Esophagus muscularis mucosa (tissue), 4 donors: ENCODE measurements at regions of chr19 and their contacts with region 1.

Region 1: DNA sequence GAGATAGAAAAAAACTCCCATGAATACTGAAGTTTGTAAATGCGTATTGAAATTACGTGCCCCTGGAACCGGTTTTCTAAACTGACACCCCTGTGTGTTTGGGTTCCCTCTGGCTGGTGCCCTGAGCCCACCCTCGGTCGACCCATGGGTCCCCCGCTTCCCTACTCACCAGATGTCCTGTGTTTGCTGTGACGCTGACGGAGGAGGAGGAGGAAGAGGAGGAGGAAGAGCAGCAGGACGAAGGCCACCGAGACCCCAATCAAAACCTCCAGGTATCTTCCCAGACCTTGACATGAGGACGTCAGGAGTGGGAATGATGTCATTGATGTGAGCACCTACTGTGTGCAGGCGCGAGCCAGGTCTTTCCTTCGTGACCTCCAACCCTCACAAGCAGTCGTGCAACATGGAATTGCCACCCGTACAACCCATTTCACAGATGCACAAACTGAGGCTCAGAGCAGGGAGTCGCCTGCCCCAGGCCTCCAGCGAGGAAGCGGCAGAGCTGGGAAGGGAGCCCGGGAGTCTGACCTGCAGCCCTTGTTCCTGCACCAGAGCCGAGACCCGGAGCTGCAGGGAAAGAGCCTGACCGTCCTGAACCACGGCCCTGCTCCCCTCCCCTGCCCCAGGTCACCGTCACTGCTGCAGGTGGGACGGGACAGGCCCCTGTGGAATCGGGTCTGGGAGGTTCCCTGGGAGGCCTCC is 3.7 kb downstream of the LILRB3 start:
- DNase-seq: no peak
- H3K4me3 ChIP-seq: no peak overlapping the region
- H3K27ac ChIP-seq: no peak overlapping the region
- H3K4me1 ChIP-seq: no peaks in the 10 kb centered on the region
- H3K27me3 ChIP-seq: peaks cover 0 to 39% (median 0%) of the 10 kb centered on the region in 4 donors
- CTCF ChIP-seq: no peak
- EP300 ChIP-seq: no peak
- POLR2A ChIP-seq: no peak

Region 2: DNA sequence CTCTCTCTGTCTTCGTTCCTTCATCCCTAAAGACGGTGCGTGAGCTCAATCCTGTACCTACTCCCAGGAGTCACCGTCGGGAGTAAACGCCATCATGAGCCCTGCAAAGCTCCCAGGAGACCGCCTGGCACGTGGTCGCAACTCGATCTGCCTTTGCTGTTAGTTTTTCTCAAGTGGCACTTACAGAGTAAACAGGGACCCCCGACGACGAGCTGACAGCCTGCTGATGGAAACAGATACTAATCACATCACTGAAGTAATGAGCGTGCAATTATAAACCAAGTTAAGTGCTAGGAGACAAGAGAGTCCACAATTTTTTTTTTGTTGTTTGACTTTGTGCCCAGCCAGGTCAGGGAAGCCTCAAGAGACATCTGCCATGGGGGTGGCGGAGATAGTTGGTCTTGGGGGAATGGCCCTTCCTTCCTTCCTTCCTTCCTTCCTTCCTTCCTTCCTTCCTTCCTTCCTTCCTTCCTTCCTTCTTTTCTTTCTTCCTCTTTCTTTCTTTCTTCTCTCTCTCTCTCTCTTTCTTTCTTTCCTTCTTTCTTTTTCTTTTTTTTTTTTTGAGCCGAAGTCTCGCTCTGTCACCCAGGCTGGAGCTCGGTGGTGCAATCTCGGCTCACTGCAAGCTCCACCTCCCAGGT is 204.1 kb before region 1 on chr19:
- intact Hi-C with region 1: no loop called
- DNase-seq: no peak
- H3K4me3 ChIP-seq: no peak overlapping the region
- H3K27ac ChIP-seq: no peak overlapping the region
- H3K4me1 ChIP-seq: no peaks in the 10 kb centered on the region
- H3K27me3 ChIP-seq: peaks cover 0 to 79% (median 0%) of the 10 kb centered on the region in 4 donors
- CTCF ChIP-seq: no peak
- EP300 ChIP-seq: no peak
- POLR2A ChIP-seq: no peak

Region 3: DNA sequence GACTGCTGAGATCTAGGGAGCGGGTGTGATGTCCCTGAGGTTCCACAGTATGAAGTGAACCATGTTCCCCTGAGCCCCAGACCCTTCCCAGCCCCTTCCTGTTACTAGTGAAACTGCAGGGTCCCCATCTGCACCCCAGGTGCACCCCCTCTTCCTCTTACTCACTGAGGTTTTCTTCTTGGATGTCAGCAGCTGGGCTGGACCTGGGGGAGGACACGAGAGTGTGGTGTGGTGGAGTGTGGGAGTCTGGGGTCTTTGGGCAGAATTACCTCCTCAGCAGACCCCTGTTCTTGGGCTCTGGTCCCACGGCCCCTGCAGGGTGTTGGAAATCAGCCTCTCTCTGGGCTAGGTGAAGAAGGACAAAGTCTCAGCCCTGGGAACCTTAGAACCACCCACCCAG is 26.8 kb after region 1 on chr19:
- intact Hi-C with region 1: loop called (anchors 2 kb)
- DNase-seq: peak; percentile 81
- H3K4me3 ChIP-seq: no peak overlapping the region
- H3K27ac ChIP-seq: no peak overlapping the region
- H3K4me1 ChIP-seq: no peaks in the 10 kb centered on the region
- H3K27me3 ChIP-seq: peaks cover 0 to 28% (median 0%) of the 10 kb centered on the region in 4 donors
- CTCF ChIP-seq: no peak
- EP300 ChIP-seq: no peak
- POLR2A ChIP-seq: no peak